ENCODE measurements at regions of chr9 and their contacts with region 1.

Region 1: DNA sequence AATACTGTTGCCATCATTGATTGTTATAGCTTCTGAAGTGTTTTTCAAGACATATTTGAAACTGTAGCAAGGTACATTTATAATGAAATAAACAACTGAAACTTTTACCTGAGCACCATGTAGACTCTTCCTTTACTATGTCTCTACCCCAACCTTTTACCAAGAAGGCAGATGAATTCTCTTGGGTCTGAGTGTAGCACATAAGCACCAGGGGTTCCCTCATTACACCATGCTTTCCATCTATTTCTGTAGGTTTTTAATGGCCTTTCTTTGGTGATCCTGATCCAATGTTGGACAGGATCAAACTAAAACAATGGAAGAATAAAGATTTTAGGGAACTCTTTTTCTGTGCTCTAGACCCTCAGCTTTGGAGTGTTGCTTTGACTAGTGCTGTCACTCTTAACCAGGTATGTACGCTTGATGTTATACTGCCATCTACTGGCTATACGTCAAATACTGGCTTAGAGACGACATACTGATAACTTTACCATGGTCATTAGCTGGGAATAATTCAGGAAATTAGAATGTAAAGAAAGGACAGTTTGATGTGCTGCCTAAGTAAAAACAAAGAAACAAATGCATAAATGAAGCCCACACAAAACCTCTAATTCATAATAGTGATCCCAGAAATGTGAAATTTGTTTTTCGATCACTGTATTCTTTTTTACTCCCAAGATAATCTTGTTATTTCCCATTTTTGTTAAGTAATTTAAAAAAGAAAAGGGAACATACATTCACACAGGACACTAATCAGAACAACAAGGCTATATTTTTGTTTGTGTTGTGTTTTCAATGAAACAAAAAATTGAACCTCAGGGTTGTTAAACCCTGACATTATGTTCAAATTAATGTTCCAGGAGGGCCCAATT is 30.7 kb downstream of the IFNW1 start:
- DNase-seq: peak; percentile 70
- ATAC-seq: peak; percentile 100
- H3K4me3 ChIP-seq: no peak overlapping the region
- H3K27ac ChIP-seq: no peak overlapping the region
- H3K4me1 ChIP-seq: no peaks in the 10 kb centered on the region
- H3K27me3 ChIP-seq: peaks cover 4% of the 10 kb centered on the region; the same call in 1 of the 2 replicates
- CTCF ChIP-seq: peak; percentile 62 to 93 (median 75); a peak in 5 of 6 replicates
- POLR2A ChIP-seq: no peak
- RAD21 ChIP-seq: peak; percentile 88

Region 2: GRCh38 chr9:19940811-19941535 is 1170.0 kb before region 1 on chr9:
- CTCF ChIA-PET with region 1: interaction called, 6 read pairs
- POLR2A ChIA-PET with region 1: no interaction called
- RAD21 ChIA-PET with region 1: no interaction called
- intact Hi-C with region 1: loop called (anchors 5 kb)
- DNase-seq: no peak
- ATAC-seq: no peak
- H3K4me3 ChIP-seq: no peak overlapping the region
- H3K27ac ChIP-seq: no peak overlapping the region
- H3K4me1 ChIP-seq: no peaks in the 10 kb centered on the region
- H3K27me3 ChIP-seq: peaks cover 26% of the 10 kb centered on the region
- CTCF ChIP-seq: no peak
- POLR2A ChIP-seq: no peak
- RAD21 ChIP-seq: no peak

Region 3: GRCh38 chr9:20622330-20623020 is 488.5 kb before region 1 on chr9 and contains the start of gene MLLT3:
- CTCF ChIA-PET with region 1: interaction called, 32 read pairs
- POLR2A ChIA-PET with region 1: no interaction called
- RAD21 ChIA-PET with region 1: interaction called in 1 of 2 experiments, 3 read pairs
- intact Hi-C with region 1: loop called (anchors 1 kb)
- DNase-seq: peak; percentile 84
- ATAC-seq: peak; percentile 88
- H3K4me3 ChIP-seq: peak within 1 kb of the TSS; percentile 52 to 75
- H3K27ac ChIP-seq: peak within 1 kb of the TSS; percentile 66
- H3K4me1 ChIP-seq: peaks cover 0 to 23% of the 10 kb centered on the region in 2 experiments; a peak in 2 of 4 replicates
- H3K27me3 ChIP-seq: peaks cover 10% of the 10 kb centered on the region; the same call in 1 of the 2 replicates
- CTCF ChIP-seq: no peak
- POLR2A ChIP-seq: peak; percentile 24
- RAD21 ChIP-seq: no peak
- total RNA-seq, gene MLLT3: 4.3 TPM

Region 4: DNA sequence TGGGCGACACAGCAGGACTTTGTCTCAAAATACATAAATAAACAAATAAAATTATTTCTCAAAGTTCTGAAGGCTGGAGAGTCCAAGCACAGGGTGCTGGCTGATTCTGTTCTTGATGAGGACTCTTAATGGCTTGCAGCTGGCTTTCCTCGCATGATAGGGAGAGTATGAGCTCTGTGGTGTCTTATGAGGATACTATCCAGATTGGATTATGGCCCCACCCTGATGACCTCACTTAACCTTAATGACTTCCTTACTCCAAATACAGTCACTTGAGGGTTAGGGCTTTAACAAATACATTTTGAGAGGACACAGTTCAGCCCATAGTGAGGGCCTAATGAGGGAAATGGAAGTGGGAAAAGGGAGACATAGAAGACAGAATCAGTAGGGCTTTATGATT is 339.2 kb before region 1 on chr9:
- CTCF ChIA-PET with region 1: no interaction called
- POLR2A ChIA-PET with region 1: no interaction called
- RAD21 ChIA-PET with region 1: no interaction called
- intact Hi-C with region 1: no loop called
- DNase-seq: no peak
- ATAC-seq: no peak
- H3K4me3 ChIP-seq: no peak overlapping the region
- H3K27ac ChIP-seq: no peak overlapping the region
- H3K4me1 ChIP-seq: no peaks in the 10 kb centered on the region
- H3K27me3 ChIP-seq: no peaks in the 10 kb centered on the region
- CTCF ChIP-seq: no peak
- POLR2A ChIP-seq: no peak
- RAD21 ChIP-seq: no peak

Region 5: GRCh38 chr9:20941174-20941690 is 169.7 kb before region 1 on chr9:
- CTCF ChIA-PET with region 1: interaction called, 17 read pairs
- POLR2A ChIA-PET with region 1: no interaction called
- RAD21 ChIA-PET with region 1: interaction called, 4 to 10 read pairs
- intact Hi-C with region 1: loop called (anchors 2 kb)
- DNase-seq: peak; percentile 62
- ATAC-seq: peak; percentile 100
- H3K4me3 ChIP-seq: no peak overlapping the region
- H3K27ac ChIP-seq: no peak overlapping the region
- H3K4me1 ChIP-seq: no peaks in the 10 kb centered on the region
- H3K27me3 ChIP-seq: no peaks in the 10 kb centered on the region
- CTCF ChIP-seq: peak; percentile 72 to 89 (median 80)
- POLR2A ChIP-seq: no peak
- RAD21 ChIP-seq: peak; percentile 92

Region 6: GRCh38 chr9:21165516-21165915 is 54.6 kb after region 1 on chr9:
- CTCF ChIA-PET with region 1: no interaction called
- POLR2A ChIA-PET with region 1: no interaction called
- RAD21 ChIA-PET with region 1: no interaction called
- intact Hi-C with region 1: no loop called
- DNase-seq: no peak
- ATAC-seq: no peak
- H3K4me3 ChIP-seq: no peak overlapping the region
- H3K27ac ChIP-seq: no peak overlapping the region
- H3K4me1 ChIP-seq: no peaks in the 10 kb centered on the region
- H3K27me3 ChIP-seq: no peaks in the 10 kb centered on the region
- CTCF ChIP-seq: no peak
- POLR2A ChIP-seq: no peak
- RAD21 ChIP-seq: no peak